Aorta (tissue), 5 donors: ENCODE measurements at regions of chr7 and their contacts with region 1.

Region 1: DNA sequence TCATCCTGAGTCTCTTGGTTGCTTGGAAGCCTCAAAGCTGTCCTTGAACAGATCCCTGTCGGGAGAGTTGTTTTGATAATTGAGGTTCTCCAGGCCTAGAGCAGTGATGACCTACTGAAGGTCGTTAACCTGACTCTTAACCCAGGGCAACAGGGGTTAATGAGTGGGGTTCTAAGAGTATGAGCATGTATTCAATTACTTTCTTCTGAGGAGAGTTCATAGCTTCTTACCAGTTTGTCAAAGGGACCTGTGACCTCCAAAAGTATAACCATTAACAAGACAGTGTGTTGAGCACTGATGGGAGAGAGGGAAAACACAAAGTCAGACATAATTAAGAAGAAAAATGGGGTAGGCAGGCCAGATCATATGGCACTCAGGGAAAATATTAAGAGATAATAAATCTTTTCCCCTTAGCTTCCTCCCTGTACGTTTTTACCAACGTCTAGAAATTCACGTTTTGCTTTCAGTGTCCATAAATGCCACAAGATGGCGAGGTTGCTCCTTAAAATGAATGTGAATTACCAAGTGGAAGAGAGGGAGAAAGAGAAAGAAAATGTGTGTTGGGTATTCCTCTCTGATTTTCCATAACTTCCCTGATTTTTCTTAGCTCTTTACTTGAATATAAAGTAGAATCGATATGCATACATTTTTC is 97.6 kb downstream of the SUGCT start:
- DNase-seq: no peak
- ATAC-seq: no peak
- H3K4me3 ChIP-seq: no peak overlapping the region
- H3K27ac ChIP-seq: no peak overlapping the region
- H3K4me1 ChIP-seq: no peaks in the 10 kb centered on the region
- H3K27me3 ChIP-seq: no peaks in the 10 kb centered on the region

Region 2: GRCh38 chr7:40283391-40283790 is 51.0 kb after region 1 on chr7:
- intact Hi-C with region 1: no loop called
- DNase-seq: no peak
- ATAC-seq: no peak
- H3K4me3 ChIP-seq: no peak overlapping the region
- H3K27ac ChIP-seq: no peak overlapping the region
- H3K4me1 ChIP-seq: no peaks in the 10 kb centered on the region
- H3K27me3 ChIP-seq: no peaks in the 10 kb centered on the region

Region 3: DNA sequence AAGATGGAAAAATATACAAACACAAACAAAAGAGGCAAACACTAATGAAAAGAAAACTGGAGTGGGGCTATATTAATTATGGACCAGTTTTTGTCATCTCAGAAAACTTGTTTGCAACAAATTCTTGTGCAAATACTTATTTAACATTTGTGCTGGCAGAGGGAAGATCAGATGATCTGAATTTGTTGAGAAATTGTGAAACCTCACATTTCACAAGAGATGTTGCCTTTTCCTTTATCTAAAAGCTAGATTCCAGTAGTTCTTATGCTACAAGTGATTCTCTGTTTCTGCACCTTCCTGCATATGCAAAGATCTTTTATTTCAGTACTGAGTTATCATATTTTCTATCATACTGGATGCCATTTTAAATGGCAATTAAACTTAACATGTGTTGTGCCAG is 223.1 kb after region 1 on chr7:
- intact Hi-C with region 1: no loop called
- DNase-seq: no peak
- ATAC-seq: no peak
- H3K4me3 ChIP-seq: no peak overlapping the region
- H3K27ac ChIP-seq: no peak overlapping the region
- H3K4me1 ChIP-seq: no peaks in the 10 kb centered on the region
- H3K27me3 ChIP-seq: no peaks in the 10 kb centered on the region

Region 4: GRCh38 chr7:40763318-40764287 is 531.2 kb after region 1 on chr7:
- intact Hi-C with region 1: loop called in 1 of 2 experiments (anchors 10 kb)
- DNase-seq: no peak
- ATAC-seq: peak; percentile 39
- H3K4me3 ChIP-seq: peak overlapping the region in 1 of 2 donors; percentile 18
- H3K27ac ChIP-seq: peak overlapping the region; percentile 14 to 69
- H3K4me1 ChIP-seq: peaks cover 2 to 7% of the 10 kb centered on the region in 2 donors
- H3K27me3 ChIP-seq: no peaks in the 10 kb centered on the region